ENCODE measurements at regions of chr1 and their contacts with region 1.

Region 1: DNA sequence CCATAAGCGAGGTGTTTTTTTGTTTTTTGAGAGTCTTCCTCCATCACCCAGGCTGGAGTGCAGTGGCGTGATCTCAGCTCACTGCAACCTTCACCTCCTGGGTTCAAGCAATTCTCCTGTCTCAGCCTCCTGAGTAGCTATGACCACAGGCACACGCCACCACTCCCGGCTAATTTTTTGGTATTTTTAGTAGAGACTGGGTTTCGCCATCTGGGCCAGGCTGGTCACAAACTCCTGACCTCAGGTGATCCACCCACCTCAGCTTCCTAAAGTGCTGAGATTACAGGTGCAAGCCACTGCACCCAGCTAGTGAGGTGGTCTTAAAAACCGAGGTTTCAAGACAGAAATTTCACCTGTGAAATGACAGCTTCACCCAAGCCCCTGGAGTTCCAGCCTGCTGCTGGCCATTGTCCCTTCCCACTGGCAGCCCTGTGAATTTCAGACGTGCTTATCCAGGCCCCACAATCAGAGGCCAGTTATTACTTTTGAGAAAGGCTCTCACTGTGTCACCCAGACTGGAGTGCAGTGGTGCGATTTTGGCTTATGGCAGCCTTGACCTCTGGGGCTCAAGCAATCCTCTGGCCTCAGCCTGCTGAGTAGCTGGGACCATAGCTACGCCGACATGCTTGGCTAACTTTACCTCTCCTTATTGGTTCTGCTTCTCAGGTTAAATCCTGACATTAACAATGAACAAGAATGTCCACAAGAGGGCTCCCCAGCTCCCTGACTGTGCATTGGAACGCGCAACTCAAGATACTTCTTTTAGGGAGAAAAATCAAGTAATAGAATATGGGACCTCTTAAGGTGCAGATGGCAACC is 19.4 kb downstream of the ENO1 start:
- DNase-seq: no peak
- H3K4me3 ChIP-seq: no peak overlapping the region
- H3K27ac ChIP-seq: no peak overlapping the region
- H3K27me3 ChIP-seq: no peaks in the 10 kb centered on the region
- CTCF ChIP-seq: peak; percentile 71

Region 2: DNA sequence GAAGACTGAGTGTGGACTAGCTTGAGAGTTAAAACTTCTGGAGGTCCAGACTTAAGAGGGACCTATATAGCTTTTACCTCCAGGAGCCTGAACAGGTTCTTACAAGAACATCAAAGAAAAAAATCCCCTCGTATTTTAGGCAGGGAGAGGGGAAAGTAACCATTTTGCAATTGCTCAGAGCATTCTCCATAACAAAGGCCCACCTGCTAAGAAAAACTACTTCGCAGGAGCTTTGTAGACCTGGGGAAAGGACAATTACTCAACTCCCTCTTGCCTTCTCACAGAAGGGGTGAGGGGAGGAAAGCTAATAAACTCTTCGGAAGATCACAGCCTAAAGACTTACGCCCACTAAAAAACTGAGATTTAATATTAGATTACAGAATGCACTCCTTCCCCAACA is 127.9 kb before region 1 on chr1:
- CTCF ChIA-PET with region 1: no interaction called
- POLR2A ChIA-PET with region 1: no interaction called
- DNase-seq: no peak
- H3K4me3 ChIP-seq: no peak overlapping the region
- H3K27ac ChIP-seq: no peak overlapping the region
- H3K27me3 ChIP-seq: no peaks in the 10 kb centered on the region
- CTCF ChIP-seq: no peak

Region 3: DNA sequence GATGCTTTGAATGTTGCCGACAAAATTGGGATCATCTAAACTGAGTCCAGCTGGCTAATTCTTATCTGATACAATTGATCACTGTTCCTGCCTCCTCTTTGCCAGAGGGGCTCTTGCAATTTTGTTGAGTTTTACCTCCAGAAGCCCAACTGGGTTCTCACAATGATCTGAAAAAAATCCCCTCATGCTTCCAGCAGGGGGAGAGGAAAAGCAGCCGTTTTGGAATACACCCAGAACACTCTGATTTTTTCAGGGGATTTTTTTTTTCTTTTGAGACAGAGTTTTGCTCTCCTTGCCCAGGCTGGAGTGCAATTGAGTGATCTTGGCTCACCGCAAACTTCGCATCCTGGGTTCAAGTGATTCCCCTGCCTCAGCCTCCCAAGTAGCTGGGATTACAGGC is 27.8 kb before region 1 on chr1:
- CTCF ChIA-PET with region 1: no interaction called
- POLR2A ChIA-PET with region 1: no interaction called
- DNase-seq: no peak
- H3K4me3 ChIP-seq: no peak overlapping the region
- H3K27ac ChIP-seq: no peak overlapping the region
- H3K27me3 ChIP-seq: peaks cover 2% of the 10 kb centered on the region
- CTCF ChIP-seq: peak; percentile 64

Region 4: GRCh38 chr1:8873506-8874229 is 14.6 kb after region 1 on chr1:
- CTCF ChIA-PET with region 1: interaction called, 10 read pairs
- POLR2A ChIA-PET with region 1: interaction called, 16 read pairs
- DNase-seq: peak; percentile 84
- H3K4me3 ChIP-seq: peak overlapping the region; percentile 20; the same call in 1 of the 2 replicates
- H3K27ac ChIP-seq: peak overlapping the region; percentile 65
- H3K27me3 ChIP-seq: no peaks in the 10 kb centered on the region
- CTCF ChIP-seq: no peak

Region 5: DNA sequence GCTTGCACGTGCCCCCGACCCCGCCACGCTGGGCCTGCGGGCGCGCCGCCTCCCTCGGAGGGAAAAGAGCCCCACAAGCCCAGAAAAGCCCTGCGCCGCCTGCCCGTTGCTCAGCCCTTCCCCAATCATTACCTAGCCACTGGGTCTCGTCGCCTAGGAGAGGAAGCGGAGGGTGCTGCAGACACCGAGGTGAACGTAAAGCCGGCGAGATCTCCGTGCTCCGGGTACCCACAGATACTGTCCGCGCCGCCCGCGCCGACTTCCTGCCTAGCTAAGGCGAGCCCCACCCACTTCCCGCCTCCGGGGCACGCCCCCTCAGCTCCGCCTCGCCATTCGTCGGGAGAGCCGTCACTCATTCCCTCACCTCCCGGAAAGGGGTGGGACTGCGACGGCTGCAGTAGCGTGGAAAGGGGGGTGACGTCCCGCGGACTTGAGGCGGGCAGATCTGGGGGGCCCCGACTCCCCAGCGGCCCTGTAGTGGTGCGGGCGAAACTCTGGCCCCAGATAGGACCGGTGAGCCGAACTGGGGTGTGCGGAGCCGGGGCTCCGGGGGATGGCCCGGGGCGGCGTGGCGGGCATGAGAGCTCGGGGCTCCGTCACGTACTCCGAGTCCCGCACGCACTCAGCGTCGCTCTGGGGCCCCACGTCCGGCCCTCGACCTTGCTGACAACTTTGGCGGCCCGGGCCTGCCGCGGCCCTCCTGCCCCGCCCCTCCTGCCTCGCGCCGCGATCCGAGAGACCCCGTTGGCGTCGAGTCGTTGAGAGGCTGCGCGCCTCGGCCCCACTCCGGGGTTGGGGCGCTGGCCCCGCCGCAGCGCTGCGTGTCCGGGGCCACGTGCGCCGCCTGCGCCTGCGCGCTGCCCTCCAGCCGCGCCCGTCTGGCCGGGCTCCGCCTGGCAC is 19.6 kb after region 1 on chr1 and contains the start of gene ENO1:
- CTCF ChIA-PET with region 1: interaction called, 10 read pairs
- POLR2A ChIA-PET with region 1: interaction called, 16 read pairs
- DNase-seq: peak; percentile 96
- H3K4me3 ChIP-seq: peak within 1 kb of the TSS; percentile 95
- H3K27ac ChIP-seq: peak within 1 kb of the TSS; percentile 94
- H3K27me3 ChIP-seq: no peaks in the 10 kb centered on the region
- CTCF ChIP-seq: no peak
- polyA plus RNA-seq, gene ENO1: 1,423 and 1,563 TPM in 2 replicates

Measured in AG04450 (cell line).